ENCODE measurements at regions of chr3 and their contacts with region 1.

Region 1: GRCh38 chr3:150384296-150385212 is 23.5 kb upstream of the TSC22D2 start:
- DNase-seq: peak; percentile 97
- ATAC-seq: peak; percentile 92
- H3K4me3 ChIP-seq: peak overlapping the region; percentile 58
- H3K27ac ChIP-seq: peak overlapping the region; percentile 99
- H3K4me1 ChIP-seq: peaks cover 23% of the 10 kb centered on the region
- H3K27me3 ChIP-seq: no peaks in the 10 kb centered on the region
- CTCF ChIP-seq: peak; percentile 35 to 61 (median 60)
- EP300 ChIP-seq: no peak
- POLR2A ChIP-seq: peak; percentile 59
- RAD21 ChIP-seq: peak; percentile 47; the same call in 1 of the 2 replicates

Region 2: GRCh38 chr3:150365132-150365604 is 19.4 kb before region 1 on chr3:
- CTCF ChIA-PET with region 1: interaction called, 3 read pairs
- POLR2A ChIA-PET with region 1: interaction called, 4 read pairs
- RAD21 ChIA-PET with region 1: interaction called, 12 read pairs
- SMC1A ChIA-PET with region 1: interaction called, 10 read pairs
- in situ Hi-C with region 1: no loop called
- intact Hi-C with region 1: no loop called
- DNase-seq: peak; percentile 53
- ATAC-seq: peak; percentile 91
- H3K4me3 ChIP-seq: no peak overlapping the region
- H3K27ac ChIP-seq: no peak overlapping the region
- H3K4me1 ChIP-seq: no peaks in the 10 kb centered on the region
- H3K27me3 ChIP-seq: no peaks in the 10 kb centered on the region
- CTCF ChIP-seq: no peak
- EP300 ChIP-seq: no peak
- POLR2A ChIP-seq: no peak
- RAD21 ChIP-seq: no peak

Region 3: GRCh38 chr3:150371741-150372254 is 12.8 kb before region 1 on chr3:
- CTCF ChIA-PET with region 1: interaction called, 8 read pairs
- POLR2A ChIA-PET with region 1: interaction called, 18 read pairs
- RAD21 ChIA-PET with region 1: interaction called, 9 read pairs
- SMC1A ChIA-PET with region 1: interaction called, 7 read pairs
- in situ Hi-C with region 1: no loop called
- intact Hi-C with region 1: no loop called
- DNase-seq: no peak
- ATAC-seq: peak; percentile 20; the same call in 2 of the 3 replicates
- H3K4me3 ChIP-seq: no peak overlapping the region
- H3K27ac ChIP-seq: no peak overlapping the region
- H3K4me1 ChIP-seq: 0 out of 2 replicates have a peak, but pooled peaks cover 2% of the 10 kb centered on the region
- H3K27me3 ChIP-seq: no peaks in the 10 kb centered on the region
- CTCF ChIP-seq: no peak
- EP300 ChIP-seq: no peak
- POLR2A ChIP-seq: no peak
- RAD21 ChIP-seq: no peak

Region 4: DNA sequence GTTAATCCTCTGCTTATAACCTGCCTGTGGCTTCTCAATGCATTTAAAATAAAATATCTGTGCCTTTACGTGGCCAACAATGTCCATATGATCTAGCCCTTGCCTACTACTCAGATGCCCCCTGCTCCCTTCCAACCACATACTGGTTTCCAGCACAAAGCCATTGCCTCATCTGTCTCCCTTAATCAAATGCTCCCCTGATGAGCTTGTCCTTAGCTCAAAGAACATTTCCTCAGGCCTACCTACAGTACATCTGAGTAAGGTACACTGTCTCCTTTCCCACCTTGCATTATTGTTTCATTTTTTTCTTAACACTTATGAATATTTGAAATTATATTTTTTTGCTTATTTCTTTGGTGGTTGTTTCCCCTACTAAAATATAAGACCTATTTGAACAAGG is 17.7 kb after region 1 on chr3:
- CTCF ChIA-PET with region 1: interaction called, 9 read pairs
- POLR2A ChIA-PET with region 1: interaction called, 36 read pairs
- RAD21 ChIA-PET with region 1: interaction called, 52 read pairs
- SMC1A ChIA-PET with region 1: interaction called, 128 read pairs
- in situ Hi-C with region 1: no loop called
- intact Hi-C with region 1: no loop called
- DNase-seq: no peak
- ATAC-seq: no peak
- H3K4me3 ChIP-seq: no peak overlapping the region
- H3K27ac ChIP-seq: no peak overlapping the region
- H3K4me1 ChIP-seq: no peaks in the 10 kb centered on the region
- H3K27me3 ChIP-seq: no peaks in the 10 kb centered on the region; a peak in 1 of 4 replicates
- CTCF ChIP-seq: no peak
- EP300 ChIP-seq: no peak
- POLR2A ChIP-seq: no peak
- RAD21 ChIP-seq: no peak